HEK293 (cell line): ENCODE measurements at regions of chr6 and their contacts with region 1.

Region 1: DNA sequence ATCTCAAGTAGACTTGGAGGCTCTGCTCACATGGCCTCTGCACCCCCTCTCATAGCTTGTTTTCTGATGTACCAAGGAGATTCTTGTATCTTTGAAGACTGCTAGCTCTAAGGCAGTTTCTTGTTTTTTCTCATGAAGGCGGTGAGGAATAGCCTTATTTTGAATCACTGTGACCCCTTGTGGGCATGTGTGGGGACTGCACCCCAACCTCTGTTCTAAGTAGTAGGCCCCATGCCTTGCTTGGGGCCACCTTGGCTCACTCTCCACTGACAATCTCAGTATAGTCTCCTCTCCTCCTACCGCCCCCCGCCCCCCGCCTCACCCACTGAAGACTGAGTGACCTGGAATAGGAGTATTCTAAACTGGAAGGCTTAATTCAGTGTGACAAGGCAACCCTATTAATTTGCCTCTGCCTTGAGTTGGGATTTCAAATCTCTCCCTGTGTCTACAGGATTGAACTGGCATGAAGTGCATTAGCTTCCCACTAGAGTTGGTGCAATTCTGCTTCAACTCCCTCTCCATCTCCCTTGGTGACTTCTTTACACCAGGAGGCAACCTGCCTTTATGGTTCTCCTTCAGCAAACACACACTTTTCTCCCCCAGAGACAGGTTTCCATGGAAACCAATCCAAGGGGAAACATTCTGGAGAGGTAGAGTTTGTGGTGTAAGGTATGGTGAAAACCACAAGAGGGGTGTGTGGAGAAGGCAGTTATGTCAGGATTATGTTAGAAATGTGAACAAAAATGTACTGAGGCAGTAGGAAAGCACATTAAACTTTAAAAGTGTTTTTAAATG is 75.5 kb upstream of the ECI2 start:
- H3K4me3 ChIP-seq: no peak overlapping the region
- H3K27ac ChIP-seq: no peak overlapping the region
- H3K4me1 ChIP-seq: no peaks in the 10 kb centered on the region
- CTCF ChIP-seq: peak; percentile 39; the same call in 1 of the 2 replicates

Region 2: DNA sequence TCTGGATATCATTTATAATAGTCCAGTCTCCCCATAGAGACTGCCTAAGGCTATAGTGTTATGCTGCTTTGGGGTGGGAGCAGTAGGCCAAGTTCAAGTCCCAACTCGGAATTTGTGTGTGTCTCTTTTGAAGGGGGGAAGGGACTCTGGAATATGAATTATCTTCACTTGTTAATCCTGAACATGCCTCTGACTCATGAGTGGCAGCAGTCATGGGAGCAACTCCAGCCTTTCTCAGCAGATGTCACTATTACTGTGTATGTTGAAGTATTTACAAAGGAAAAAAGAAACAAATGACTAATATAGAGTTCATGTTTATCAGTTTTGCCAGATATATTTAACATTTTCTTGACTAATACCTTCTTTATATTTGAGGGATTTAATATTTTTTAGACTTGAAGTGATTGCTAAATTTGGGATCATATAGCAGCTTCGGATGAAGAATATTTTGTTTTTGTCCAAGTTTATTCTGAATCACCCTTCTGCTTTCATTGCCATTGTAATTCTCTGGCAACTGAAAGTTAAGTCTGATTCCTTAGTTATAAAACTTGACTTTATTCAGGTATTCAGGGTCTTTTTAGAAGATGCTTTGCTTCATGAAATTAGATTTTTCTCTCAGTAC is 155.3 kb before region 1 on chr6:
- CTCF ChIA-PET with region 1: interaction called, 16 read pairs
- POLR2A ChIA-PET with region 1: no interaction called
- H3K4me3 ChIP-seq: no peak overlapping the region
- H3K27ac ChIP-seq: no peak overlapping the region
- H3K4me1 ChIP-seq: peaks cover 7% of the 10 kb centered on the region; the same call in 1 of the 2 replicates
- CTCF ChIP-seq: 0 out of 2 replicates have a peak, but pooled peaks have one; percentile 39

Region 3: GRCh38 chr6:4164117-4164442 is 46.7 kb before region 1 on chr6:
- CTCF ChIA-PET with region 1: no interaction called
- POLR2A ChIA-PET with region 1: no interaction called
- H3K4me3 ChIP-seq: no peak overlapping the region
- H3K27ac ChIP-seq: no peak overlapping the region
- H3K4me1 ChIP-seq: no peaks in the 10 kb centered on the region
- CTCF ChIP-seq: no peak; the same call in 1 of the 2 replicates

Region 4: DNA sequence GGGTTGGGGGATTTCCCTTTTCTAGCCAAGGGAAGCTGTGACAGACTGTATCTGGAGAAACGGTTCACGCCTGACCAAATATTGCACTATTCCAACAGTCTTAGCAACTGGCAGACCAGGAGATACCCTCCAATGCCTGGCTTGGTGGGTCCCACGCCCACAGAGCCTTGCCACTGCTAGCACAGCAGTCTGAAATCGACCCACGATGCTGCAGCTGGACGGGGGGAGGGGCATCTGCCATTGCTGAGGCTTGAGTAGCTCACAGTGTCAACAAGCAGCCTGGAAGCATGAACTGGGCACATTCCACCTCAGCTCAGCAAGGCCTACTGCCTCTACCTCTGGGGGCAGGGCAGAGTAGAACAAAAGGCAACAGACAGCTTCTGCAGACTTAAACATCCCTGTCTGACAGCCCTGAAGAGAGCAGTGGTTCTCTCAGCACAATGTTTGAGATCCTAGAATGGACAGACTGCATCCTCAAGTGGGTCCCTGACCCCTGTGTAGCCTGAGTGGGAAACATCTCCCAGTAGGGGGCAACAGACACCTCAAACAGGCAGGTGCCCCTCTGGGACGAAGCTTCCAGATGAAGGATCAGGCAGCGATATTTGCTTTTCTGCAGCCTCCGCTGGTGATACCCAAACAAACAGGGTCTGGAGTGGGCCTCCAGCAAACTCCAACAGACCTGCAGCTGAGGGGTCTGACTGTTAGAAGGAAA is 14.5 kb after region 1 on chr6:
- CTCF ChIA-PET with region 1: interaction called, 11 read pairs
- POLR2A ChIA-PET with region 1: no interaction called
- H3K4me3 ChIP-seq: no peak overlapping the region
- H3K27ac ChIP-seq: no peak overlapping the region
- H3K4me1 ChIP-seq: no peaks in the 10 kb centered on the region
- CTCF ChIP-seq: peak; percentile 66